ENCODE measurements at regions of chr3 and their contacts with region 1.

Region 1: GRCh38 chr3:151227807-151228665 is 25.0 kb upstream of the GPR171 start:
- DNase-seq: peak; percentile 79
- H3K4me3 ChIP-seq: no peak overlapping the region
- H3K27ac ChIP-seq: peak overlapping the region; percentile 23 to 56 (median 45)
- H3K4me1 ChIP-seq: peaks cover 0 to 39% (median 6%) of the 10 kb centered on the region in 4 donors
- H3K27me3 ChIP-seq: no peaks in the 10 kb centered on the region
- CTCF ChIP-seq: peak; percentile 85 to 93 (median 92)
- EP300 ChIP-seq: no peak
- POLR2A ChIP-seq: no peak

Region 2: DNA sequence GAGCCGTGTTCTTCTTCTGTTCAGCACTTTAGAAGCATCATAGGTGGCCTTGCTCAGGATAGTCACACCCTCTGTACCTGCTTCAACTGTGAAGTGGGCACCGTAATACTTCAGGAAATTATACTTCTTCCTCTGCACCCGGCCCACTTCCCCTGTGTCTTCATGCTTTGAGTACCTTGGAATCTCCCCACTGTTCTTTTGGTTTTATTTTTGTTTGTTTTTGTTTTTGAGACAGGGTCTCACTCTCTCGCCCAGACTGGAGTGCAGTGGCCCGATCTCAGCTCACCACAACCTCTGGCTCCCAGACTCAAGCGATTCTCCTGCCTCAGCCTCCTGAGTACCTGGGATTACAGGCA is 48.6 kb after region 1 on chr3:
- in situ Hi-C with region 1: loop called in 3 of 4 experiments (anchors 5 to 10 kb)
- intact Hi-C with region 1: no loop called
- DNase-seq: no peak
- H3K4me3 ChIP-seq: peak overlapping the region in 1 of 4 donors; percentile 19
- H3K27ac ChIP-seq: peak overlapping the region; percentile 38 to 60 (median 52)
- H3K4me1 ChIP-seq: peaks cover 0 to 7% (median 0%) of the 10 kb centered on the region in 4 donors
- H3K27me3 ChIP-seq: no peaks in the 10 kb centered on the region
- CTCF ChIP-seq: no peak
- EP300 ChIP-seq: no peak
- POLR2A ChIP-seq: no peak

Region 3: DNA sequence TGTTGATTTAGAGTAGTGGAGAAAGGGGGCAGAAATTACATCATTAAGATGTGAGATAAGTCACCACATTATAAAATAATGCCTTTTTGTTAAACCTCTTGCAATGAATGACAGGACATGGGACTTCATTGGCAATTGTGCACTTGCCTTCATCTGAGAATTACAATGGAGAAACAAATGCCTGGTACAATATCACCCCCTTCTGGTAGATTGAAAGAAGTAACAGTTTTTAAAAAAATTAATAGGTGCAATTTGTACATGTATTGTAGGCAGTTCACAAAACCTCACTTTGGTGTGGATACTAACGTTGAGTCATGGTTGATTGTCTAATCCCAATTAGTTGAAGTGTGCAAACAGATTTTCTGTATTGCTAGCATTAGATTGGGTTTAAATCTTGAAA is 54.9 kb after region 1 on chr3:
- in situ Hi-C with region 1: loop called in 3 of 4 experiments (anchors 5 to 10 kb)
- intact Hi-C with region 1: loop called (anchors 2 kb)
- DNase-seq: no peak
- H3K4me3 ChIP-seq: no peak overlapping the region
- H3K27ac ChIP-seq: peak overlapping the region in 3 of 4 donors; percentile 14 to 47 (median 25)
- H3K4me1 ChIP-seq: peaks cover 0 to 22% (median 8%) of the 10 kb centered on the region in 4 donors
- H3K27me3 ChIP-seq: no peaks in the 10 kb centered on the region
- CTCF ChIP-seq: peak; percentile 65 to 85 (median 69)
- EP300 ChIP-seq: no peak
- POLR2A ChIP-seq: no peak

Region 4: GRCh38 chr3:151327571-151328198 is 99.6 kb after region 1 on chr3:
- in situ Hi-C with region 1: no loop called
- intact Hi-C with region 1: loop called (anchors 5 kb)
- DNase-seq: no peak
- H3K4me3 ChIP-seq: peak overlapping the region in 1 of 4 donors; percentile 13
- H3K27ac ChIP-seq: peak overlapping the region in 1 of 4 donors; percentile 14
- H3K4me1 ChIP-seq: peaks cover 0 to 6% (median 0%) of the 10 kb centered on the region in 4 donors
- H3K27me3 ChIP-seq: no peaks in the 10 kb centered on the region
- CTCF ChIP-seq: peak; percentile 38 to 70 (median 62)
- EP300 ChIP-seq: no peak
- POLR2A ChIP-seq: no peak

Region 5: GRCh38 chr3:151568184-151568583 is 340.1 kb after region 1 on chr3:
- in situ Hi-C with region 1: no loop called
- intact Hi-C with region 1: no loop called
- DNase-seq: no peak
- H3K4me3 ChIP-seq: no peak overlapping the region
- H3K27ac ChIP-seq: no peak overlapping the region
- H3K4me1 ChIP-seq: no peaks in the 10 kb centered on the region
- H3K27me3 ChIP-seq: no peaks in the 10 kb centered on the region
- CTCF ChIP-seq: no peak
- EP300 ChIP-seq: no peak
- POLR2A ChIP-seq: no peak